Dendritic cell treated with granulocyte-macrophage colony-stimulating factor and Interleukin-4, amounts not matched to agents 40 ng/mL and 50 ng/mL, for 4 days (primary cell): ENCODE measurements at regions of chr6 and their contacts with region 1.

Region 1: GRCh38 chr6:163750431-163751031 is 336.0 kb downstream of the QKI start:
- H3K4me3 Mint-ChIP-seq: peak overlapping the region; percentile 24
- H3K27ac Mint-ChIP-seq: peak overlapping the region; percentile 76
- H3K4me1 Mint-ChIP-seq: peaks cover 54% of the 10 kb centered on the region
- H3K27me3 Mint-ChIP-seq: peaks cover 44% of the 10 kb centered on the region

Region 2: DNA sequence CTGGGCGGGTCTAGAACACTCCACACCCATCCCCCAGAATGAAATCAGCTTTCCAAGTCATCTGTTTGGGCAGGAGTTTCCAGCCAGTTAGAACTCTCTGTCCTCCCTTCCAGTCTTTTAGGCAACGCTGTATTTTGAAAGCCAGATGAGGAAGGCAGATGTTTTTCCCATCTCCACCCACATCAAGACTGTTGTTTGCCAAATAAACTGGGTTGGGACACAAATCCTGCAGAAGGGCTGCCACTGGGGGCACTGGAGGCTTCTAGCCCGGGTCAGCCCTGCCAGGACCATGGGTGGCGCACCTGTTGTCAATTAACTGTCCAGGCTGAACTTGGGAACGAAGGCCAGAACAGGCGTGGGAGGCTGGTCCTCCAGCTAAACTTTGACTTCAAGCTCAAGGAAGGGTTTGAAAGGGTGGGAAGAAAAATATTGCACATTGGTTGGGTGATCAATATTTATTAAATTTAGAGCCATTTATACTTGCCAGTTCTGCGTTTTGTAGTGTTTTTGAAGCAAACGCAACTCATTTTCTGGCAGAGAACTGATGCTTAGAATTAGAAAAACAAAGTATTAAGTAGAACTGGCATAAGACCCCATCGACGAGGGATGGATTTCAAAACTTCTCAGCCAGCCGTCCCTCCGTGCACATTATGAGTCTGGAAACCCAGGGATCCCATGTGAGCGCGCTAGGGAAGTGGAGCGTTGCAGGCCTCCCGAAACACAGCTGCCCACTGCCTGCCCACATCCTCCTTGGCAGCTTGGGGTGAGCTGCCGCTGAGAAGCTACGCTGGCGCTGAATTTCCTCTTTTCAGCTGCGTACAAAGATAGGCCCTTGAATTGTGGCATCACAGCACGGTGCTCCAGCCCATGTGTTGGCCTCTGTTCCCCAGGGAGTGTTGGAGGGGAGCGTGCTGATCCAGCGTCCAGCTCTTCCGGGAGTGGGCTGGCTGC is 38.6 kb before region 1 on chr6:
- intact Hi-C with region 1: loop called (anchors 5 kb)
- H3K4me3 Mint-ChIP-seq: peak overlapping the region; percentile 37
- H3K27ac Mint-ChIP-seq: peak overlapping the region; percentile 95
- H3K4me1 Mint-ChIP-seq: peaks cover 96% of the 10 kb centered on the region
- H3K27me3 Mint-ChIP-seq: no peaks in the 10 kb centered on the region

Region 3: DNA sequence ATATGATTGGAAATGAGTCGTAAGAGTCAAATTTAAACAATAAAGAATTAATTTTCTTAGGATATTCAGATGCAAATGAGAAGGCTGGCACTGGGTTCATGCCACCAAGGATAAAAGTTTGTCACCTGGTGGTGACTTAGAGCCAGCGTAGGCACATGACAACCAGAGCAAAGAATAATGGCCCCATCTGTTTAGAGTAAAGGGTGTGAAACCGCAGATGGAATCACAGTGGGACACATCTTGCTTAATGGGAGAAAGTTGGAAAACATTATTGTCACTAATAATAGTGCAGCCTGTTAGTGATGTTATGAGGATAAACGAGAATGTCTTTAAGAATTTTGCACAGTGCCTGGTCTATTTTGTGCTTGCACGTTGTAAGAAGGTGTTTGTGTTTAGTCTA is 391.8 kb after region 1 on chr6:
- intact Hi-C with region 1: no loop called
- H3K4me3 Mint-ChIP-seq: no peak overlapping the region
- H3K27ac Mint-ChIP-seq: no peak overlapping the region
- H3K4me1 Mint-ChIP-seq: no peaks in the 10 kb centered on the region
- H3K27me3 Mint-ChIP-seq: no peaks in the 10 kb centered on the region